ENCODE measurements at regions of chr14 and their contacts with region 1.

Region 1: DNA sequence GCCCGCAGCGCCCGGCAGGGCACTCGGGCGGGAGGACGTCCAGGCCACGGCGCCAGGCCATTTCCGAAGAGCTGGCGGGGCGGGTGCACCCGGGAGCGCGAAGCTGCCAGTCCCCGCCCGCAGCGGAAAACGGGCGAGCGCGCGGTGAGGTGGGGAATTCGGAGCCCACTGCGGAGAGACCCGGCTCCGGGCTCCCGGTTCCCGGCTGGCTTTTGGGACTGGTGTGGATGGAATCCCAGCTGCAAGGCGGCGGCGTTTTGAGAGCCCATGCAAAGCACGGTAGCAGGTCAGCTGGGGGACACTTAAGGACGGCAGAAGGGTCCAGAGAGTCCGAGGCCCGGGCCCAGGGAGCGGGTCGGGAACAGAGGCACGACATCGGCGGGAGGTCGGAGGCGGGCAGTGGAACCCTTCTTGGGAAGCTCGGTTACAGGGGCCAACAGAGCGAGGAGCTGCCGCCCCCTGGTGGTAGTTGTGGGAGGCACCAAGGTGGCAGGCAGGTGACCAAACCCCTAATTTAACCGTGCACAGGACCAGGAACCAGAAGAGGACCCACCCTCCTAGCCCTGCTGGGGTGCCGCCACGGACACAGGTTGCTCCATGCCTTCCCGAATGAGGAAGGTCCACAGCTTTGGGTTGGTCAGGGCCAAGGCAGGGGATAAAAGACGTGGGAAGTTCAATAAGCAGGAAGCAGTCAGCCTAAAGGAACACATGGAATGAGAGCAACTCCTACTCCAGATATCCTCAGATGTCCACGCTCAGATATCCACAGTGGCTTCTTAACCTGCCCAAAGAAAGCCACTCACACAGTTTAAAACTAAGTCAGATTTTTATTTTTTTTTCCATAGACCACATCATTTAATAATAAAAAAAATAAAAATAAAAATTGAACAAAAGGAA is 685 bp upstream of the CDH24 start:
- DNase-seq: peak; percentile 92
- H3K4me3 ChIP-seq: peak overlapping the region; percentile 49 to 81 (median 72)
- H3K27ac ChIP-seq: peak overlapping the region; percentile 57 to 86 (median 86)
- H3K4me1 ChIP-seq: peaks cover 10 to 26% (median 20%) of the 10 kb centered on the region in 4 donors
- H3K27me3 ChIP-seq: no peaks in the 10 kb centered on the region
- CTCF ChIP-seq: peak; percentile 95 to 97 (median 96)
- EP300 ChIP-seq: no peak
- POLR2A ChIP-seq: peak; percentile 7

Region 2: GRCh38 chr14:22986508-22987054 is 71.4 kb before region 1 on chr14:
- in situ Hi-C with region 1: loop called (anchors 5 to 10 kb)
- intact Hi-C with region 1: loop called (anchors 2 kb)
- DNase-seq: peak; percentile 93
- H3K4me3 ChIP-seq: no peak overlapping the region
- H3K27ac ChIP-seq: no peak overlapping the region
- H3K4me1 ChIP-seq: peaks cover 0 to 17% (median 11%) of the 10 kb centered on the region in 4 donors
- H3K27me3 ChIP-seq: peaks cover 7% of the 10 kb centered on the region
- CTCF ChIP-seq: peak; percentile 86 to 94 (median 93)
- EP300 ChIP-seq: no peak
- POLR2A ChIP-seq: no peak

Region 3: DNA sequence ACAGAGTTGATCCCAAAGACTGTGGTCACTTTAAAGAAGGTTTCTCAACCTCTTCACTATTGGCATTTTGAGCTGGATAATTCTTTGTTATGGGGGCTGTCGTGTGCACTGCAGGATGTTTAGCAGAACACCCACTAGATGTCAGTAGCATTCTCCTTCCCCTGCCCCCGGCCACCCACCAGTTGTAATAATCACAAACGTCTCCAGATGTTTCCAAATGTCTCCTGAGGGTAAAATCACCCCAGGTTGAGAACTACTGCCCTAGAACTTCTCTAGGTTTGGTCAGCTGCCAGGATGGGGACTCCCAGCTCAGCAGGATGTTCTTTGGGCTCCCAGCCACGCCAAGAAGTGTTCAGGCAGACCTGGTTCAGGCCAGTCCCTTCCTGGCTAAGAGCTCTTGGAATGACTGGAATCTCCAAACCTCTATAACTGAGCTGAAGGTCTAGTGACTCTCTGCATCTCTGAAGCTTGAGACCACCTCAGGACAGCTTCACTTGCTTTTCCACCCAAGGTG is 63.2 kb before region 1 on chr14:
- in situ Hi-C with region 1: loop called in 1 of 4 experiments (anchors 5 kb)
- intact Hi-C with region 1: no loop called
- DNase-seq: no peak
- H3K4me3 ChIP-seq: no peak overlapping the region
- H3K27ac ChIP-seq: no peak overlapping the region
- H3K4me1 ChIP-seq: peaks cover 0 to 6% (median under 1%) of the 10 kb centered on the region in 4 donors
- H3K27me3 ChIP-seq: no peaks in the 10 kb centered on the region
- CTCF ChIP-seq: peak in 4 of 5 experiments; percentile 18 to 32 (median 24)
- EP300 ChIP-seq: no peak
- POLR2A ChIP-seq: no peak

Measured in transverse colon (tissue), 4 donors.